Transverse colon (tissue), 4 donors: ENCODE measurements at regions of chr1 and their contacts with region 1.

Region 1: GRCh38 chr1:152459596-152460528 is 45.8 kb upstream of the CRNN start:
- DNase-seq: peak; percentile 72
- H3K4me3 ChIP-seq: peak overlapping the region in 1 of 4 donors; percentile 13
- H3K27ac ChIP-seq: peak overlapping the region in 1 of 4 donors; percentile 35
- H3K4me1 ChIP-seq: peaks cover 0 to 6% (median 0%) of the 10 kb centered on the region in 4 donors
- H3K27me3 ChIP-seq: no peaks in the 10 kb centered on the region
- CTCF ChIP-seq: peak; percentile 57 to 74 (median 66)
- EP300 ChIP-seq: no peak
- POLR2A ChIP-seq: no peak

Region 2: GRCh38 chr1:152052606-152053005 is 407.3 kb before region 1 on chr1:
- in situ Hi-C with region 1: loop called in 2 of 4 experiments (anchors 10 to 25 kb)
- intact Hi-C with region 1: loop called (anchors 5 kb)
- DNase-seq: peak; percentile 88
- H3K4me3 ChIP-seq: no peak overlapping the region
- H3K27ac ChIP-seq: no peak overlapping the region
- H3K4me1 ChIP-seq: peaks cover 11 to 14% (median 13%) of the 10 kb centered on the region in 4 donors
- H3K27me3 ChIP-seq: peaks cover 45% of the 10 kb centered on the region
- CTCF ChIP-seq: peak; percentile 89 to 93 (median 91)
- EP300 ChIP-seq: no peak
- POLR2A ChIP-seq: no peak

Region 3: GRCh38 chr1:152141974-152142584 is 317.8 kb before region 1 on chr1:
- in situ Hi-C with region 1: no loop called
- intact Hi-C with region 1: loop called (anchors 2 kb)
- DNase-seq: peak; percentile 41
- H3K4me3 ChIP-seq: no peak overlapping the region
- H3K27ac ChIP-seq: no peak overlapping the region
- H3K4me1 ChIP-seq: no peaks in the 10 kb centered on the region
- H3K27me3 ChIP-seq: peaks cover 10% of the 10 kb centered on the region
- CTCF ChIP-seq: peak; percentile 56 to 66 (median 63)
- EP300 ChIP-seq: no peak
- POLR2A ChIP-seq: no peak

Region 4: DNA sequence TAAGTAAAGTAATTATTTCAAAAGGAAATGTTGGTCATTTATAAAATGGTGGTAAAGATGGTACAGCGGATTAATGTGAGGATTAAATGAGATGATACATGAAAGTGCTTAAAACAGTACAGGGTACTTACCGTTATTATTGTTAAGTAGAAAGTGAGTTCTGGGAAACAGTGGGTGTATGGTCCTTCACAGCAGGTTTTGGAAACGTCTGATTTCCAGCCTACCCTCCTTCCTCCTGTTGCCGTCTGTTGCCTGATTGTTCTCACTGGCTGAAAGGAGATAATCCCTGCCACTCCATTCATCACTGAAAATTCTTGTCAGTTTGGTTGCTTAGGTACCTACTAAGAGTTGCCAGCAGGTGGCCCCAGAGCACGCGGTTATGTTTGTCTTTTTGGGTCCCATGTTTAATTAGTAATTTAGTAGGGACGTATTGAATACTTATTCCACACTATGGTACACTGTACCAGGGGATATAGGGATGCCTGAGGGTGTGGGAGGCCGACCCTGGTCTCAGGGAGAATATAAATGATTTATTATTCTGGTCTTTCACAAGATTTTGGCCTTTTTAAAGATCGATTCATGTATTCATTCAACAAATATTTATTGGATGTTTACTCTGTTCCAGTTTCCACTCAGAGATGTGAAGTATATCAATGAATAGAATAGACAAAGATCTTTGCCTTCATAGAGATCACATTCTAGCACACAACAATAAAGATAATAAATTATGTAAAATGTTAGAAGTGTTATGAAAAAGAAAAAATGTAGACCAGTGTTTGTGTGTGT is 270.0 kb before region 1 on chr1:
- in situ Hi-C with region 1: loop called (anchors 5 to 25 kb)
- intact Hi-C with region 1: loop called (anchors 2 kb)
- DNase-seq: peak; percentile 50
- H3K4me3 ChIP-seq: peak overlapping the region in 1 of 4 donors; percentile 60
- H3K27ac ChIP-seq: peak overlapping the region in 1 of 4 donors; percentile 24
- H3K4me1 ChIP-seq: peaks cover 0 to 8% (median 4%) of the 10 kb centered on the region in 4 donors
- H3K27me3 ChIP-seq: peaks cover 6% of the 10 kb centered on the region
- CTCF ChIP-seq: peak; percentile 60 to 69 (median 64)
- EP300 ChIP-seq: no peak
- POLR2A ChIP-seq: no peak

Region 5: GRCh38 chr1:152398812-152399698 is 60.8 kb before region 1 on chr1:
- in situ Hi-C with region 1: no loop called
- intact Hi-C with region 1: loop called (anchors 2 kb)
- DNase-seq: no peak
- H3K4me3 ChIP-seq: no peak overlapping the region
- H3K27ac ChIP-seq: no peak overlapping the region
- H3K4me1 ChIP-seq: no peaks in the 10 kb centered on the region
- H3K27me3 ChIP-seq: peaks cover under 1% of the 10 kb centered on the region
- CTCF ChIP-seq: peak in 3 of 5 experiments; percentile 24 to 25 (median 25)
- EP300 ChIP-seq: no peak
- POLR2A ChIP-seq: no peak